B cell (primary cell): ENCODE measurements at regions of chr4 and their contacts with region 1.

Region 1: GRCh38 chr4:113761620-113762185 is at the start of gene CAMK2D:
- DNase-seq: peak; percentile 91
- ATAC-seq: peak; percentile 46
- H3K4me3 ChIP-seq: peak within 1 kb of the TSS; percentile 91 to 96 (median 93)
- H3K4me3 Mint-ChIP-seq: peak within 1 kb of the TSS; percentile 94
- H3K27ac ChIP-seq: peak within 1 kb of the TSS; percentile 98 to 99
- H3K27ac Mint-ChIP-seq: peak within 1 kb of the TSS; percentile 98
- H3K4me1 ChIP-seq: peaks cover 16 to 27% of the 10 kb centered on the region in 2 donors
- H3K4me1 Mint-ChIP-seq: peaks cover 36% of the 10 kb centered on the region
- H3K27me3 ChIP-seq: no peaks in the 10 kb centered on the region
- H3K27me3 Mint-ChIP-seq: no peaks in the 10 kb centered on the region
- CTCF ChIP-seq: peak; percentile 34
- total RNA-seq, gene CAMK2D: 55.9 and 57.0 TPM in 2 replicates

Region 2: DNA sequence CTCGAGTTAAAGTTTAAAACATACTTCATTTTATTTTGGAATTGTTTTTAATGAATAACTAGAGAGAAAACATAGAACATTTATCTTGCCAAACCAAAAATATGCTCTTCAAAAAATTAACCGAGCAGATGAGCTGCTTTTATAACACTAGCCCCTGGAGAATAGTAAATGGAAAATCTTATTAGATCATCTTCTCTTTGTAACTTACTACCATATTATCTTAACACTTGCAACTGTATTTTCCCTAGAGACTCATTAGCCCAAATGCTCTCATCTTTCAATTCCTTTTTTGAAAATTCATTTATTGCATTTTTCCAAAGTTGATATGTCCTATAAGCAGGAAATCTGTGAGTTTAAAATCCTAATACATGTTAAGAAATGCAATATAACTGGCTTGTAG is 143.5 kb before region 1 on chr4:
- CTCF ChIA-PET with region 1: no interaction called
- POLR2A ChIA-PET with region 1: no interaction called
- intact Hi-C with region 1: loop called (anchors 5 kb)
- DNase-seq: peak; percentile 25
- ATAC-seq: peak; percentile 81
- H3K4me3 ChIP-seq: peak overlapping the region in 1 of 5 experiments; percentile 18
- H3K4me3 Mint-ChIP-seq: no peak overlapping the region
- H3K27ac ChIP-seq: peak overlapping the region; percentile 43 to 75
- H3K27ac Mint-ChIP-seq: no peak overlapping the region
- H3K4me1 ChIP-seq: peaks cover 45 to 63% of the 10 kb centered on the region in 2 donors
- H3K4me1 Mint-ChIP-seq: peaks cover 51% of the 10 kb centered on the region
- H3K27me3 ChIP-seq: no peaks in the 10 kb centered on the region
- H3K27me3 Mint-ChIP-seq: no peaks in the 10 kb centered on the region
- CTCF ChIP-seq: no peak

Region 3: GRCh38 chr4:113744667-113745240 is 16.9 kb before region 1 on chr4:
- CTCF ChIA-PET with region 1: no interaction called
- POLR2A ChIA-PET with region 1: no interaction called
- intact Hi-C with region 1: loop called (anchors 2 kb)
- DNase-seq: no peak
- ATAC-seq: no peak
- H3K4me3 ChIP-seq: no peak overlapping the region
- H3K4me3 Mint-ChIP-seq: no peak overlapping the region
- H3K27ac ChIP-seq: peak overlapping the region in 1 of 2 donors; percentile 54
- H3K27ac Mint-ChIP-seq: no peak overlapping the region
- H3K4me1 ChIP-seq: peaks cover 0 to 11% of the 10 kb centered on the region in 2 donors
- H3K4me1 Mint-ChIP-seq: peaks cover 24% of the 10 kb centered on the region
- H3K27me3 ChIP-seq: no peaks in the 10 kb centered on the region
- H3K27me3 Mint-ChIP-seq: no peaks in the 10 kb centered on the region
- CTCF ChIP-seq: no peak

Region 4: GRCh38 chr4:113790478-113790877 is 28.8 kb after region 1 on chr4:
- CTCF ChIA-PET with region 1: no interaction called
- POLR2A ChIA-PET with region 1: no interaction called
- intact Hi-C with region 1: no loop called
- DNase-seq: no peak
- ATAC-seq: no peak
- H3K4me3 ChIP-seq: no peak overlapping the region
- H3K4me3 Mint-ChIP-seq: no peak overlapping the region
- H3K27ac ChIP-seq: no peak overlapping the region
- H3K27ac Mint-ChIP-seq: no peak overlapping the region
- H3K4me1 ChIP-seq: peaks cover 0 to 9% of the 10 kb centered on the region in 2 donors
- H3K4me1 Mint-ChIP-seq: no peaks in the 10 kb centered on the region
- H3K27me3 ChIP-seq: no peaks in the 10 kb centered on the region
- H3K27me3 Mint-ChIP-seq: peaks cover 8% of the 10 kb centered on the region
- CTCF ChIP-seq: no peak

Region 5: GRCh38 chr4:113869743-113870375 is 108.2 kb after region 1 on chr4:
- CTCF ChIA-PET with region 1: no interaction called
- POLR2A ChIA-PET with region 1: no interaction called
- intact Hi-C with region 1: loop called (anchors 5 kb)
- DNase-seq: peak; percentile 45
- ATAC-seq: peak; percentile 97
- H3K4me3 ChIP-seq: no peak overlapping the region
- H3K4me3 Mint-ChIP-seq: peak overlapping the region; percentile 27
- H3K27ac ChIP-seq: no peak overlapping the region
- H3K27ac Mint-ChIP-seq: peak overlapping the region; percentile 85
- H3K4me1 ChIP-seq: peaks cover 4 to 5% of the 10 kb centered on the region in 2 donors
- H3K4me1 Mint-ChIP-seq: peaks cover 11% of the 10 kb centered on the region
- H3K27me3 ChIP-seq: no peaks in the 10 kb centered on the region
- H3K27me3 Mint-ChIP-seq: no peaks in the 10 kb centered on the region
- CTCF ChIP-seq: no peak